ENCODE measurements at regions of chr2 and their contacts with region 1.

Region 1: DNA sequence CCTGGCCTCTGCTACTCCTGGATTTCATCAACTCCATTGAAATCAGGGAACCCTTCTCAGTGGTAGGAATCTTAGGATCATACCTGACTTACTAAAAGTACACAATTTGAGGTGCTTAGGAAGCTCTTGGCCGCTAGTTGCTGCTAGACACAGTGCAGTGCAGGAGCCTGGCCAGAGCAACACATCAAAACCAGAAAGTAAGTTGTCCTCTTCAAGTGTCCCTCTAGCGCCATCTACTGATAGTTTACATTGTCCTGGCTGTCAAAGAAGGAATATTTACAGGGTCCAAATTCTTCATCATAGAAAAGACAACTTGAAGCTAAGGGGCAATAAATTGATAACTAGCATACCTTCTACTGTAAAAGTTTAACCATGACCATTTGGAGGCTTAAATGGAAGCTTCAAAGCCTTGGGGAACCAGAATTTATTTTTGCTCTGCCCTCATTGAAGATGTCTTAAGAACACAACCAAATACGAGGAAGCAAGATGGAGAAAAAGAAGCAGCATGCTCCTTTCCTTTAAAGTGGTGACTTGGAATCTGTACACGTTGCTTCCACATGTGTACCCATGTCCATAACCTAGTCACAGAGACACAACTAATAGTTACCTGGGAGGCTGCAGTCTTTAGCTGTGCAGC is 889.1 kb upstream of the GCFC2 start:
- DNase-seq: no peak

Region 2: DNA sequence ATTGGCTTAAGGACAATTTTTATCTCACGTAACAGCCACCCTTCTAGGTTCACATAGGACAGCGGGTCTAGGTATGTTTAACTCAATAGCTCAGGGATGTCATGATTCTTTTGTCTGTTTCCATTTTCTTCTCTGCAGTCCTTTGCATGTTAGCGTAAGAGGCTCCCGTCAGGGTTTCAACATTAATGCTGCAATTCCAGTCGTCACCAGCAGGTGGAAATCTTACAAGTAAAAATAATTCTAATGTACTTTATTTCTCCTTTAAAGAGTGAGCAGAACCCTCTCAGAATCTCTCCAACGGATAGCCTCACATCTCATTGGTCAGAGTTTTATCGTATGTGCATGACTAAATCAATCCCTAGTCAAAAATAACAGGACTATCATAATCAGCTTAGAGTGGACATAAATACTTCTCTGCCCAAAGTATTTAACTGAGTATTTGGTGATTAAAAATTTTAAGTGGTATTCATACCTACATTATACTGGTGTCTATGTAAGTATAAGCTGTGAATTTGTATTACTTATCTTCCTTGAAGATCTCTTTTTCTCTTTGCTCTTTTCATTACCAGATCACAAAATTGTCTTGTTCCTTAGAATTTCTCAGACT is 401.9 kb before region 1 on chr2:
- intact Hi-C with region 1: loop called (anchors 5 kb)
- DNase-seq: no peak

Region 3: DNA sequence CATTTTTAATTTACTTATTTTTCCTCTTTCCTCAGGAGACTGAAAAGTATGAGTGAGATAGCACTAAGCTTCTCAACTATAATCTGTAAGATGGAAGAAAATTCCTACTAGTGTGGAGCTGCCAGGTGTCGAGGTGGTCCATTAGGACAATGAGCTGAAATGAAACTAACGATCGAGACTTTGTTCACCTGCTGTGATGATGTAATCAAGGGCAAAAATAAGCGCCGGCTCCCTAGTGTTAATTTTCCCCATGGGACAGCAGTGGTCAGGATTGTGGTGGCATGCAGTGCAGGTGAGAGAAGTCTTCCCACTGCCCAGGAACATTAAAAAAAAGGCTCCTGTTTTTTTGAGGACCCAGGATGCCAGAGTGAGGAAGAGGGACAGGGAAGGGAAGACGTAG is 30.0 kb before region 1 on chr2:
- intact Hi-C with region 1: no loop called
- DNase-seq: no peak

Region 4: GRCh38 chr2:76684756-76685155 is 84.9 kb after region 1 on chr2:
- intact Hi-C with region 1: no loop called
- DNase-seq: no peak